PC-9 (cell line): ENCODE measurements at regions of chr6 and their contacts with region 1.

Region 1: GRCh38 chr6:26196846-26197648 is 109.8 kb downstream of the HFE start:
- DNase-seq: peak; percentile 55 to 66
- H3K4me3 ChIP-seq: peak overlapping the region; percentile 77
- H3K27ac ChIP-seq: peak overlapping the region; percentile 85
- H3K4me1 ChIP-seq: peaks cover 11% of the 10 kb centered on the region; the same call in 1 of the 2 replicates
- H3K27me3 ChIP-seq: no peaks in the 10 kb centered on the region
- CTCF ChIP-seq: no peak

Region 2: GRCh38 chr6:26031595-26032339 is 165.3 kb before region 1 on chr6:
- CTCF ChIA-PET with region 1: no interaction called
- POLR2A ChIA-PET with region 1: interaction called, 30 read pairs
- intact Hi-C with region 1: loop called (anchors 1 kb)
- DNase-seq: peak; percentile 91 to 95
- H3K4me3 ChIP-seq: peak overlapping the region; percentile 81
- H3K27ac ChIP-seq: peak overlapping the region; percentile 79
- H3K4me1 ChIP-seq: peaks cover 46% of the 10 kb centered on the region
- H3K27me3 ChIP-seq: no peaks in the 10 kb centered on the region
- CTCF ChIP-seq: no peak

Region 3: GRCh38 chr6:26122793-26123674 is 74.0 kb before region 1 on chr6:
- CTCF ChIA-PET with region 1: interaction called, 3 read pairs
- POLR2A ChIA-PET with region 1: interaction called, 148 read pairs
- intact Hi-C with region 1: loop called (anchors 1 kb)
- DNase-seq: peak; percentile 91 to 98
- H3K4me3 ChIP-seq: peak overlapping the region; percentile 86
- H3K27ac ChIP-seq: peak overlapping the region; percentile 78
- H3K4me1 ChIP-seq: peaks cover 22% of the 10 kb centered on the region
- H3K27me3 ChIP-seq: no peaks in the 10 kb centered on the region
- CTCF ChIP-seq: no peak

Region 4: DNA sequence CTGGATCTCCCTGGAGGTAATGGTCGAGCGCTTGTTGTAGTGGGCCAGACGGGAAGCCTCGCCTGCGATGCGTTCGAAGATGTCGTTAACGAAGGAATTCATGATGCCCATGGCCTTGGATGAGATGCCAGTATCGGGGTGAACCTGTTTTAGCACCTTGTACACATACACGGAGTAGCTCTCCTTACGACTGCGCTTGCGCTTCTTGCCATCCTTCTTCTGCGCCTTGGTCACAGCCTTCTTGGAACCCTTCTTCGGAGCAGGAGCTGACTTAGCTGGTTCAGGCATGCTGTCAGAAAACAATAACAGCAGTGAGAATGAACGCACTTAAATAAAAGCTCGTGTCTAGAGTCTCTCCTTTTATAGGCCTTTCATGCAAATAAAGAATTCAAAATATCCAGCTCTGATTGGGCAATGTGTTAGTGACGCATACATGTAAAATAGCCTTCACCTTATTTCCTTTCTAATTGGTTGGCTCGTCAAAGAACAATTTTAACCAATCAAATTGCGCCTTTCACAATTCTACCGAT is 19.4 kb after region 1 on chr6:
- CTCF ChIA-PET with region 1: no interaction called
- POLR2A ChIA-PET with region 1: interaction called, 46 read pairs
- intact Hi-C with region 1: no loop called
- DNase-seq: peak; percentile 65 to 95
- H3K4me3 ChIP-seq: peak overlapping the region; percentile 72
- H3K27ac ChIP-seq: peak overlapping the region; percentile 80
- H3K4me1 ChIP-seq: 0 out of 2 replicates have a peak, but pooled peaks cover 14% of the 10 kb centered on the region
- H3K27me3 ChIP-seq: no peaks in the 10 kb centered on the region
- CTCF ChIP-seq: no peak

Region 5: DNA sequence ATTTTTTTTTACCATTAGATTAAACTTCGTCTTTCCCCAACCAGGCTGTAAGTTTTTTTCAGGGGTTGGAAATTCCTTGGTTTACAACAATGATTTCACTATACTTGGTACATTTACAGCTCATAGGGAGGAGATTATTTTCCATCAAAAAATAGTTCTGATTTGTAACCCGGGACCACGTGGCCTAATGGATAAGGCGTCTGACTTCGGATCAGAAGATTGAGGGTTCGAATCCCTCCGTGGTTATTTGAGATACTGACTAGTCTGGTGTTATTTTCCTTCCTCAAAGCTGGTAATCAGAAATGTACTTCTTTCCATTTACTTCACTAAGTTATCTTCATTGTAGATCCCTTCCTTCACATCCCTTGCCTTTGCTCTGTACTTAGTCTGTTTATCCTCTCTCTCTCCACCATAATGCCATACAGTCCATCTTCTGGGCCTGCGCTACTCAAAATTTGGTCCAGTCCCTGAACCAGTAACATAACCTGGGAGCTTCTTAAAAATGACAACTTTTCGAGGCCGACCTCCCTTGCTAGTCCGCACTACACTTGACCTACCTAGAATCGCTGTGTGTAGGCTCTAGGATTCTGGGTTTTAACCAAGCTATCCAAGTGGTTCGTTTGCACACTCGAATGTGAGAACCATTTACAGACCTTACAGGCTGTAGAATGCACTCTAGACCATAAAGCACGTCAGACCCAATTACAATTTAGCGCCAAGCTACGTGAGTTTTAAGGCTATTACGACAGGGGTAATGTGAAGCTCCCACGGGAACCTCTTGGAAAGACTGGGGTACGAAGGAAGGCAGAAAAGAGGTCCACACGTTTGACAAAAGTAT is 125.8 kb after region 1 on chr6:
- CTCF ChIA-PET with region 1: no interaction called
- POLR2A ChIA-PET with region 1: interaction called, 14 read pairs
- intact Hi-C with region 1: no loop called
- DNase-seq: peak; percentile 77 to 88
- H3K4me3 ChIP-seq: peak overlapping the region; percentile 72
- H3K27ac ChIP-seq: peak overlapping the region; percentile 57
- H3K4me1 ChIP-seq: peaks cover 22% of the 10 kb centered on the region
- H3K27me3 ChIP-seq: no peaks in the 10 kb centered on the region
- CTCF ChIP-seq: no peak

Region 6: DNA sequence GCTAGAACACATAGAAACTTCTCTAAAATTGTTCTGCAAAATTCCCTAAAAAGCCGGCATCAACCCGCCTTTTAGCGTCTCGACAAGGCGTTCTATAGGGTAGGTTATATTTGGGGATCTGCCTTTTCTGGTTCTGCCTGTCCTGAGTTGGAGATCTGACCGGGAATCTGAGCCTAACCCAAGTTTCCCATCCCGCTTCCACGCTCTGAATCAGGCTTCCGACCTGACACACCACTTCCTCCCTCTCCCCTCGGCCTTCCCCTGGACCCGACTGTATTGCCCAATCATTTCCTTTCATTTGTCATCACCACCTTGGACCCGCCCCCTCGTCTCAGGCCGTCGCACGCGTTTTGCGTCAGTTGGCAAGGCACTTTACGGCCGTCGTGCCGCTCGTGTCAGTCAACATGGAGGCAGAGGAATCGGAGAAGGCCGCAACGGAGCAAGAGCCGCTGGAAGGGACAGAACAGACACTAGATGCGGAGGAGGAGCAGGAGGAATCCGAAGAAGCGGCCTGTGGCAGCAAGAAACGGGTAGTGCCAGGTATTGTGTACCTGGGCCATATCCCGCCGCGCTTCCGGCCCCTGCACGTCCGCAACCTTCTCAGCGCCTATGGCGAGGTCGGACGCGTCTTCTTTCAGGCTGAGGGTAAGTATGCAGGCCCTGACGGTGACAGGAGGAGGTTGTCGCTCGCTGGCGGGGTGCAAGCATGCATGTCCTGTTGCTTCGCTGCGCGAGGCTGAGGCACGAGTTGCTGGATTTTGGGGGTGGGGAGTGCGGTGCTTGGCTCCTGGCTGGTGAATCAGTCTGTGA is 399.7 kb after region 1 on chr6 and contains the start of gene ABT1:
- CTCF ChIA-PET with region 1: no interaction called
- POLR2A ChIA-PET with region 1: interaction called, 4 read pairs
- intact Hi-C with region 1: loop called (anchors 5 kb)
- DNase-seq: peak; percentile 94 to 98
- H3K4me3 ChIP-seq: peak within 1 kb of the TSS; percentile 91
- H3K27ac ChIP-seq: peak within 1 kb of the TSS; percentile 48
- H3K4me1 ChIP-seq: 0 out of 2 replicates have a peak, but pooled peaks cover 8% of the 10 kb centered on the region
- H3K27me3 ChIP-seq: no peaks in the 10 kb centered on the region
- CTCF ChIP-seq: no peak
- total RNA-seq, gene ABT1: 16.8 and 19.5 TPM in 2 replicates